ENCODE measurements at regions of chr6 and their contacts with region 1.

Region 1: DNA sequence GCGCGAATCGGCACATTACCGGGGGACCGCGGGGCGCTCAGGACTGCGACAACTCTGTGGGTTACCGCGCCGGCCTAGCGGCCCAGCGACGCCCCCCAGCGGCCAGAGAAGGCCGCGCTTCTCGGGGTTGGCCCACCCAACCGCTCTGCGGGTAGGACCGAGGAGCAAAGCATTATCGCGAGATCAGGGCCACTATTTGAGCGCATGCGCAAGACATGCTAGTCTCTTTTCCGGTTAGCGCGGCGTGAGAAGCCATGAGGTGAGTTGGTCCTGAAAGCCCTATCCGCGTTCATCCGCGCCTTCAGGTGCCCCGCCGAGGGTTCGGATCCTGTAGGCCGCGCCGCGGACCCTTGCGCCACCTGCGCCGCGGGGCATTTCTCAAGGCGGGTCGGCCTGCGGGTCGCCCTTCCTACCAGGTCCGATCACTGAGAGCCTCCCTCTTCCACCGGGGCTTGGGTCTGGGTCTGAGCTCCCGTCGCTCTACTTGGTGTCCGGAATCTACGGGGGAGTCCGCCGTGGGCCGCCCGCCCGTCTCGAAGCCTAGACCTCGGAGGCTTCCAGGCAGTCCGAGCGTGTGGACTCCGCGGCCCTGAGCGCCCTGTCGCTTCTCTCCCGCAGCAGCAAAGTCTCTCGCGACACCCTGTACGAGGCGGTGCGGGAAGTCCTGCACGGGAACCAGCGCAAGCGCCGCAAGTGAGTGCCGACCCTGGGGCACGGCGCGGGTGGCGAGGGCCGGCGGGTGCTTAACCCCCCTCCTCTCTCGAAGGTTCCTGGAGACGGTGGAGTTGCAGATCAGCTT is at the start of gene RPL10A:
- DNase-seq: peak; percentile 90 to 99 (median 96)
- ATAC-seq: peak; percentile 88
- H3K4me3 ChIP-seq: peak within 1 kb of the TSS; percentile 74 to 100
- H3K4me3 Mint-ChIP-seq: peak within 1 kb of the TSS; percentile 96
- H3K27ac ChIP-seq: peak within 1 kb of the TSS; percentile 76 to 90
- H3K27ac Mint-ChIP-seq: peak within 1 kb of the TSS; percentile 99
- H3K4me1 ChIP-seq: peaks cover 26% of the 10 kb centered on the region
- H3K4me1 Mint-ChIP-seq: peaks cover 39% of the 10 kb centered on the region
- H3K27me3 ChIP-seq: no peaks in the 10 kb centered on the region
- H3K27me3 Mint-ChIP-seq: no peaks in the 10 kb centered on the region
- CTCF ChIP-seq: peak; percentile 90
- total RNA-seq, gene RPL10A: 2,275 to 2,367 TPM

Region 2: GRCh38 chr6:35327349-35328027 is 140.9 kb before region 1 on chr6:
- CTCF ChIA-PET with region 1: interaction called, 8 read pairs
- POLR2A ChIA-PET with region 1: no interaction called
- intact Hi-C with region 1: loop called in 1 of 2 experiments (anchors 1 kb)
- DNase-seq: peak; percentile 61 to 86 (median 82)
- ATAC-seq: peak; percentile 81
- H3K4me3 ChIP-seq: no peak overlapping the region
- H3K4me3 Mint-ChIP-seq: peak overlapping the region; percentile 42
- H3K27ac ChIP-seq: peak overlapping the region in 1 of 2 experiments; percentile 62
- H3K27ac Mint-ChIP-seq: peak overlapping the region; percentile 88
- H3K4me1 ChIP-seq: peaks cover 19% of the 10 kb centered on the region
- H3K4me1 Mint-ChIP-seq: peaks cover 21% of the 10 kb centered on the region
- H3K27me3 ChIP-seq: no peaks in the 10 kb centered on the region
- H3K27me3 Mint-ChIP-seq: no peaks in the 10 kb centered on the region
- CTCF ChIP-seq: peak; percentile 68

Region 3: DNA sequence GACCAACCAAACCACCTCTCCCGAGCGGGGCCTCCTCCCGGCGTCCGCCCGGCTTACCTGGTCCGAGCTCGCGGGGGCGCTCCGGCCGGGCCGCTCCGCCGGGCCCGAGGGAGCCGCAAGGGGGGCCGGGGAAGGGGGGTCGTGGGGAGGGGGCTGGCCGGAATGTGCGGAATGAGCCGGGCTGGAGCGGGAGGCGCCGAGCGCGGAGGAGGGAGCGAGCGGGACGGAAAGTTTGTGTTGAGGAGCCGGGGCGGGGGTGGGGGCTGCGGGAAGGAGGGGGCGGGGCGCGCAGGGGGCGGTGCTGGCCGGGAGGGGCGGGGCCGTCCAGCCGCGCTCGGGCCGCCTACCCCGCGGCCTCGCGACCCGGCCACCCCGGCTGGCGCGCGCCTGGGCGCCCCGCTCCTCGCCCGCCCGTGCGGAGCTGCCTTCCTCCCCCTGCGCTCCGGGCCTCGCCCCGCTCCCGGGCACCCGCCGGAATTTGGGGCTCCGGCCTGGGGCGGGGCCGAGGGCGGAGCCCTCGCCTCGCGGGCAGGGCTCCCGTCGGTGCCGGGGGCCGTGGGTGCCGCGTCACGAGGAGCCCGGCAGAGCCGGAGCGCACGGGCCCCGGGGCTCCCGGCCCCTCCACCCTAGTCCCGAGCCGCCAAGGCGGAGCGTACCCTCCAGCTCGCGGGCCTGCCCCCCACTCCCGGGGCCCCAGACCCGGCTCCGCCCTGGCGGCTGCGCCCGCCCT is 28.6 kb after region 1 on chr6 and contains the start of gene TEAD3:
- CTCF ChIA-PET with region 1: interaction called, 3 read pairs
- POLR2A ChIA-PET with region 1: interaction called, 5 read pairs
- intact Hi-C with region 1: loop called (anchors 1 kb)
- DNase-seq: peak in 8 of 9 experiments; percentile 10 to 73 (median 39)
- ATAC-seq: peak; percentile 72
- H3K4me3 ChIP-seq: peak within 1 kb of the TSS; percentile 55 to 65
- H3K4me3 Mint-ChIP-seq: peak within 1 kb of the TSS; percentile 80
- H3K27ac ChIP-seq: no peak within 1 kb of the TSS
- H3K27ac Mint-ChIP-seq: no peak within 1 kb of the TSS
- H3K4me1 ChIP-seq: peaks cover 11% of the 10 kb centered on the region
- H3K4me1 Mint-ChIP-seq: peaks cover 17% of the 10 kb centered on the region
- H3K27me3 ChIP-seq: peaks cover 0 to 8% of the 10 kb centered on the region in 2 experiments
- H3K27me3 Mint-ChIP-seq: peaks cover 21% of the 10 kb centered on the region
- CTCF ChIP-seq: no peak
- total RNA-seq, gene TEAD3: not detected

Region 4: GRCh38 chr6:35552285-35552917 is 84.0 kb after region 1 on chr6:
- CTCF ChIA-PET with region 1: interaction called, 9 read pairs
- POLR2A ChIA-PET with region 1: interaction called, 3 read pairs
- intact Hi-C with region 1: loop called in 1 of 2 experiments (anchors 2 kb)
- DNase-seq: peak; percentile 31 to 78 (median 61)
- ATAC-seq: peak; percentile 86
- H3K4me3 ChIP-seq: no peak overlapping the region
- H3K4me3 Mint-ChIP-seq: no peak overlapping the region
- H3K27ac ChIP-seq: no peak overlapping the region
- H3K27ac Mint-ChIP-seq: no peak overlapping the region
- H3K4me1 ChIP-seq: no peaks in the 10 kb centered on the region
- H3K4me1 Mint-ChIP-seq: peaks cover 4% of the 10 kb centered on the region
- H3K27me3 ChIP-seq: no peaks in the 10 kb centered on the region
- H3K27me3 Mint-ChIP-seq: peaks cover 2% of the 10 kb centered on the region
- CTCF ChIP-seq: peak; percentile 95

Measured in CD8-positive, alpha-beta T cell (primary cell).